GM10248 (cell line): ENCODE measurements at regions of chr6 and their contacts with region 1.

Region 1: DNA sequence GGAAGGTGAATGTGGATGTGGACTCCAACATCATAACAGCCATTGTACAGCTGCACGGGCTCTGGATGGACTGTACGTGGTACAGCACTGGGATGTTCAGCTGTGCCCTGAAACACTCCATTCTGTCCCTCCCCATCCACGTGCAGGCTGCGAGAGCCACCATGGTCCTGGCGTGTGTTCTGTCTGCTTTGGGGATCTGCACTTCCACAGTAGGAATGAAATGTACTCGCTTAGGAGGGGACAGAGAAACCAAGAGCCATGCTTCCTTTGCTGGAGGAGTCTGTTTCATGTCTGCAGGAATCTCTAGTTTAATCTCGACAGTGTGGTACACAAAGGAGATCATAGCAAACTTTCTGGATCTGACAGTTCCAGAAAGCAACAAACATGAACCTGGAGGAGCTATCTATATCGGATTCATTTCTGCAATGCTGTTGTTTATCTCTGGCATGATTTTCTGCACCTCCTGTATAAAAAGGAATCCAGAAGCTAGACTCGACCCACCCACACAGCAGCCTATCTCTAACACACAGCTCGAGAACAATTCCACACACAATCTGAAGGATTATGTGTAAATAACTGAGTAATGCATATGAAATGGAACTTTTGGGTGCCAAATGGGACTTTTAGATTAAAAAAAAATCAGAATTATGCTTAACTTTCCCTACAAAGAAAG is 12.1 kb downstream of the CLDN20 start:
- DNase-seq: no peak
- CTCF ChIP-seq: no peak

Region 2: GRCh38 chr6:155041741-155042279 is 234.1 kb before region 1 on chr6:
- CTCF ChIA-PET with region 1: no interaction called
- POLR2A ChIA-PET with region 1: no interaction called
- DNase-seq: no peak
- CTCF ChIP-seq: no peak

Region 3: GRCh38 chr6:155264693-155265320 is 11.1 kb before region 1 on chr6:
- CTCF ChIA-PET with region 1: interaction called, 18 read pairs
- POLR2A ChIA-PET with region 1: no interaction called
- DNase-seq: no peak
- CTCF ChIP-seq: no peak

Region 4: GRCh38 chr6:155366325-155366724 is 90.4 kb after region 1 on chr6:
- CTCF ChIA-PET with region 1: no interaction called
- POLR2A ChIA-PET with region 1: no interaction called
- DNase-seq: no peak
- CTCF ChIP-seq: no peak